ENCODE measurements at regions of chr14 and their contacts with region 1.

Region 1: DNA sequence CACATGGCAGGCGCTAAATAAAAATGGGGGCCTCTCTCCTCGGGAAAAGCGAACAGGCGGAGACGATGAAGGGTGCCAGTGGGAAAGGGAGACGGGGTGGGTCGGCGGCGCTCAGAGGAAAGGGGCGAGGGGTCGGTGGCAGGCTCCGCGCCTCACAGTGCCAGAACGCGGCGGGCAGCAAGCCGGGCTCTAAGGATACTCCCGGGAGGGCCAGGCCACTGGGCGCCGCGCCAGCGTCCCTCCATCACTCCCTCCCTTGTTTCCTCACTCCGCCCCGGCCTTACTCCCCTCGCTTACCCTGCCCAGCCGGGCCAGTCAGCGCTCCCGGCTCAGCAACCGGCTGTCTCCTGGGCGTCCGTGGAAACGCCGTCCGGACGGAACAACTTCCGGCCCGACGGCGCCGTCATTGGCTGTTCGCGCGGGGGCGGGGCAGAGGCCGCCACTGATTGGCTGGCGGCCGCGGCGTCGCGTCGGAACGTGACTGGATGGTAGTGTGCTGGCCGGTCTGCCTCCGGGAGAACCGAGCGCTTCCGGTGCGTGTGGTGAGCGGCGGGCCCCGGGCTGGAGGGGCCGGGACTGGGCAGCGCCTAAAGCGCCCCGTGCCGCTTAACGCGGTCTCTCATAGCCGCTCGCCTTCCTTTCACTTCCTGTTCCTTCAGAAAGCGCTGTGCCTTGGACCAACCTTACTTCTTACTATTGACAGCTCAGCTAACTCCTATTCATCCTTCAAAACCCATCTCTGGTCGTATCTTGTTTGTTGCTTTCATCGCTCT is 53.0 kb downstream of the SLC25A47 start:
- DNase-seq: peak; percentile 97
- ATAC-seq: peak; percentile 88
- H3K4me3 ChIP-seq: peak within 1 kb of the TSS; percentile 92
- H3K27ac ChIP-seq: peak within 1 kb of the TSS; percentile 65
- H3K4me1 ChIP-seq: peaks cover 21% of the 10 kb centered on the region
- H3K27me3 ChIP-seq: no peaks in the 10 kb centered on the region
- CTCF ChIP-seq: no peak

Region 2: GRCh38 chr14:100192672-100193416 is 183.3 kb before region 1 on chr14:
- CTCF ChIA-PET with region 1: no interaction called
- POLR2A ChIA-PET with region 1: no interaction called
- intact Hi-C with region 1: loop called (anchors 5 kb)
- DNase-seq: peak; percentile 99
- ATAC-seq: peak; percentile 99
- H3K4me3 ChIP-seq: peak overlapping the region; percentile 66
- H3K27ac ChIP-seq: peak overlapping the region; percentile 38
- H3K4me1 ChIP-seq: peaks cover 12% of the 10 kb centered on the region
- H3K27me3 ChIP-seq: no peaks in the 10 kb centered on the region
- CTCF ChIP-seq: peak; percentile 76

Region 3: DNA sequence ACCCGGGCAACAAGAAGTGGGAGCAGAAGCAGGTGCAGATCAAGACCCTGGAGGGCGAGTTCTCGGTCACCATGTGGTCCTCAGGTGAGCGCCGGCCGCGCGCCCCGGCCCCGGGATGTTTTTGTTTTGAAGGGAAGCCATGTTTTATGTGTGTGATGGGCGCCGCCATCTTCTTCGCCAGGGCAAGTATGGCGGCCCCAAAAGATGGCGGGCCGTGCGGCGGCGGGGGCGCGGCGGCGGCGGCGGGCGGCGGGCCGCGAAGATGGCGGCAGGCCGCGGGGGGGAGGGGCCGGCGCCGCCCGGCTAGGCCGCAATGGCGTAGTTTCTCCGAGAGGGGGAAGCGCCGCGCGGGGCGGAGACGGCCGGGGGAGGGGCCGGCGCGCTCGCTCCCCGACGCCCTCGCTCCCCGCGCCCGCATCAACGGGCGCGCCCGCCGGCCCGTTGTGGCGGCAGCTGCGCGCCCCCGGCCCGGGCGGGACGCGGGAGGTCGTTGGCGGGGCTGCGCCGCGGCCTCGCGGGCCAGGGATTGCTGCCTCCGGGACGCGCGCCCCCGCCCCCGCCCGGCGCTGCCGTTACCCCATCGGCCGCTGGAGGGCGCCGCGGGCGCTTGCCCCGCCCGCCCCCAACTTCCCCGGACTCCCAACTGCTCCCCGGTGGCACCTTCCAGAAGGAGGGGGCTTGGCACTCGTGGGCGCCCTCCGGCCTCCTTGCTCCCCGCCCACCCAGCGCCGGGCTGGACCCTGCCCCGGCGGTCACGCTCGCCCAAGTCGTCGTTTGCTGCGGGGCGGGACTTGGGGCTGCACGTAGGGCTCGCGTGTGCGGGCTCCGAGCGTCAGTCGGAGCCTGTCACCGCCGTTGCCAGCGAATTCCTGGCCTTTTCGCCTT is 136.1 kb before region 1 on chr14:
- CTCF ChIA-PET with region 1: no interaction called
- POLR2A ChIA-PET with region 1: no interaction called
- intact Hi-C with region 1: loop called (anchors 2 kb)
- DNase-seq: peak; percentile 78
- ATAC-seq: peak; percentile 27
- H3K4me3 ChIP-seq: peak overlapping the region; percentile 97
- H3K27ac ChIP-seq: peak overlapping the region; percentile 66
- H3K4me1 ChIP-seq: peaks cover 23% of the 10 kb centered on the region
- H3K27me3 ChIP-seq: no peaks in the 10 kb centered on the region
- CTCF ChIP-seq: peak; percentile 56

Region 4: DNA sequence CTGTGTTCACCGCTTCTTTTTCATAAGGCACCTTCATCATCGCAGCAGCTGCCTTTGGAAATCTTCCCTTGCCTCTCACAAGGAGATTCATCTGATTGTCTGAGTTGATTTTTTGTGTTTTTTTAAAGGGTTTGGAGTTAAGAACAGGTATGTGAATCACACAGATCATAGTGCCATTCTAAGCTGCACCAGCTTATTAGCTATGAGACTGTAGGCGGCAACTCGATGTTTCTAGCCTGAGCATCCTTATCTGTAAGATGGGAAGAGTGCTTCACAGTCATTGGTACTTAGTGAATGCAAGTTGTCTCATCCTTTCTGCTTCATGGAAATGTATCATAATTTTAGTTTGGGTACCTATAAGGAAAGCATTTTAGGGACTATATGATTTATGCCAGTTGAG is 101.9 kb before region 1 on chr14:
- CTCF ChIA-PET with region 1: no interaction called
- POLR2A ChIA-PET with region 1: no interaction called
- intact Hi-C with region 1: loop called (anchors 1 kb)
- DNase-seq: no peak
- ATAC-seq: no peak
- H3K4me3 ChIP-seq: no peak overlapping the region
- H3K27ac ChIP-seq: no peak overlapping the region
- H3K4me1 ChIP-seq: no peaks in the 10 kb centered on the region
- H3K27me3 ChIP-seq: no peaks in the 10 kb centered on the region
- CTCF ChIP-seq: no peak

Region 5: DNA sequence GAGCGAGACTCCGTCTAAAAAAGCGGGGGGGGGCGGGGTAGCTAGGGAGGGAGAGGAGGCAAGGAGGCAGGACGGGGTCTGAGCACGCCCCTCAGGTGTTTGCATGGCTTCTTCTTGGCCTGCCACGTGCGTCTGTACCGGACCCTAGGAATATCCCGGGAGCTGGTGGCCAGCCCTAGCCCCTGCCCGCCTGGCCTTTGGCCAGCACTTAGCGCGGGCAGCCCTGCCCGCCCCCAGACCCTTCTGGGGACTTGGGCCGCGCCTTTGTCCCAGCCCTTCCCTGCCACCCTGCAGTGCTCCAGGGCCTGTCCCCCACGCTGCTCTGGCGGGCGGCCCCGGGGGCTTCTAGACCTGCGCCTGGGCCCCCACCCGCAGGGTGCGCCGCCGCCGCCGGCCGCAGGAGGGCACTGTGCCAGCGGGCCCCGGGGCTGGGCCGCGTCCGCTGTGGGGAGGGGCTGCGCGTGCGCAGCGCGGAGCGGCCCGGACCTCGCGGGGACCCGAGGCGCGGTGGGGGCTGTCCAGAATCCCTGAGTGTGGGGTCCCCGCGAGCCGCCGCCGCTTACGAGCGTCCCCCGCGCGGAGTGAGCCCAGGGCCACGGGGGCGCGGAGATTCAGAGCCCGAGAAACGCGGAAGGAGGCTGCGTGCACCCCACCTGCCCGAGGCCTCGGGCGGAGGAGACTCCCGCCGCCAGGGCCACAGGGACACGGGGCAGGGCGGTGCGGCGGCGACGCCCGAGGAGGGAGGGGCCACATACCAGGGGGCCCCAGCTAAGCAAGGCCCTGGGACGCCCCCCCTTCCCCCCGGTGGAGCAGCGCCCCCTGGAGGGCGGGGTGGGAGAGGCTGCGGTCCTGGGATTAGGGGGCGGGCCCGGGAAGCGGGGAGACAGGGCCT is 90.9 kb before region 1 on chr14:
- CTCF ChIA-PET with region 1: no interaction called
- POLR2A ChIA-PET with region 1: no interaction called
- intact Hi-C with region 1: loop called (anchors 2 kb)
- DNase-seq: peak; percentile 73
- ATAC-seq: peak; percentile 78
- H3K4me3 ChIP-seq: peak overlapping the region; percentile 77
- H3K27ac ChIP-seq: peak overlapping the region; percentile 52; the same call in 1 of the 2 replicates
- H3K4me1 ChIP-seq: 0 out of 2 replicates have a peak, but pooled peaks cover 3% of the 10 kb centered on the region
- H3K27me3 ChIP-seq: no peaks in the 10 kb centered on the region
- CTCF ChIP-seq: peak; percentile 81

Region 6: DNA sequence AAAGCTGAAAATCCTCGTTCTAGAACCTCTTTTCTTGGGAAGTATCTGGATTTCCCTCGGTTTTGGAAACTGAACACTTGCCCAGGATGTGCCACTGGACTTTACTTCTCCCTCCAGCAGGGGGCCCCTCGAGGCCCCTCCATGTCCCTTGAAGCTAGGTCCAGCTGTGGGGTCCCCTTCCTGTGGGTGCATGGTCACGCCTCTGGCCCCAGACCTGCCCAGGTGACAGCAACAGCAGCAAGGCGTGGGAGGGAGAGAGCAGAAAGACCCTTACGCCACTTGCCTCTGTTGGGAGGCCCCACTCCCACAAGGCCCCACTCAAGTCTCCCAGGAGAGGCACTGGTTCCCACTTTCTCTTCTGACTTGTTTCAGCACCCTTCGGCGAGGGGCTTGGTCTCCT is 73.0 kb before region 1 on chr14:
- CTCF ChIA-PET with region 1: no interaction called
- POLR2A ChIA-PET with region 1: no interaction called
- intact Hi-C with region 1: loop called (anchors 1 kb)
- DNase-seq: peak; percentile 21
- ATAC-seq: no peak
- H3K4me3 ChIP-seq: no peak overlapping the region
- H3K27ac ChIP-seq: peak overlapping the region; percentile 49
- H3K4me1 ChIP-seq: peaks cover 33% of the 10 kb centered on the region
- H3K27me3 ChIP-seq: no peaks in the 10 kb centered on the region
- CTCF ChIP-seq: peak; percentile 81